ENCODE measurements at regions of chr7 and their contacts with region 1.

Region 1: GRCh38 chr7:28239823-28240204 is 59.2 kb upstream of the JAZF1 start:
- DNase-seq: peak; percentile 22
- ATAC-seq: peak; percentile 79
- H3K4me3 Mint-ChIP-seq: no peak overlapping the region
- H3K27ac Mint-ChIP-seq: no peak overlapping the region
- H3K4me1 Mint-ChIP-seq: peaks cover 13% of the 10 kb centered on the region
- H3K27me3 Mint-ChIP-seq: peaks cover 34% of the 10 kb centered on the region

Region 2: DNA sequence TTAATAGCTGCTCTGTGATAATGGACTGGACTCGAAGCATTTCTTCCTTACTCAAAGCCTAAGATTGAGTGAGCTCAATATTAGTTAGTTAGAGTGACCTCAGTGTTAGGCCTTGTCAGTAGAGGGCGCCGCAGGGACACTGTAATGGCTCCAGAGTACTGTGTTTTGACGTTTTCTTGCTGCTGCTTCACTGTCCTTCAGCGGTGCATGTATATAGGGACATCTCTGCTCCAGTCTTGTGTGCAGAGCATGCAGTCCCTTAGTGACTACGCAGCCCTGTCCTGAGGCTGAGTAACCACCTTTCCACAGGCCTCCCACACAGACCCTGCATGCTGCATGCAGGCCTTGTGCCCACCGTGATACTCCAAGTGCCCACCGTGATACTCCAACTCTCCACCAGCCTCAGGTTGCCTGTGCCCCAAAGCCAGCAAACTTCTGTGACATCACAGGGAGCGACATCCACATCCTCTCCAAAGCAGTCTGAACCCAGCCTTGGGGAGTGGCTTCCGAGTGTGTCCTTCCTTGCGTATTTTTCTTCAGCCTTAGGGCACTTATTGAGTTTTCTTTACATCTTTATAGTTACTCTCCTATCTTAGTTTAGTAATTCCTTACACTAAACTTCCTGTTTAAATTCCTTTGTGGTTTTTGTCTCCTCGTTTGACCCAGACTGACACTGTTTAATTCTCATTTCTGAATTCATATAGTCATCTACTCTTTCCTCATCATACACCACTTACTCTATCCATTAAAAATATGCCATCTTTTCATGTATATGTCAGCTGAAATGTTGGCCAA is 177.4 kb before region 1 on chr7:
- CTCF ChIA-PET with region 1: no interaction called
- POLR2A ChIA-PET with region 1: no interaction called
- intact Hi-C with region 1: no loop called
- DNase-seq: peak; percentile 79
- ATAC-seq: peak; percentile 79
- H3K4me3 Mint-ChIP-seq: no peak overlapping the region
- H3K27ac Mint-ChIP-seq: no peak overlapping the region
- H3K4me1 Mint-ChIP-seq: peaks cover 5% of the 10 kb centered on the region
- H3K27me3 Mint-ChIP-seq: no peaks in the 10 kb centered on the region

Region 3: DNA sequence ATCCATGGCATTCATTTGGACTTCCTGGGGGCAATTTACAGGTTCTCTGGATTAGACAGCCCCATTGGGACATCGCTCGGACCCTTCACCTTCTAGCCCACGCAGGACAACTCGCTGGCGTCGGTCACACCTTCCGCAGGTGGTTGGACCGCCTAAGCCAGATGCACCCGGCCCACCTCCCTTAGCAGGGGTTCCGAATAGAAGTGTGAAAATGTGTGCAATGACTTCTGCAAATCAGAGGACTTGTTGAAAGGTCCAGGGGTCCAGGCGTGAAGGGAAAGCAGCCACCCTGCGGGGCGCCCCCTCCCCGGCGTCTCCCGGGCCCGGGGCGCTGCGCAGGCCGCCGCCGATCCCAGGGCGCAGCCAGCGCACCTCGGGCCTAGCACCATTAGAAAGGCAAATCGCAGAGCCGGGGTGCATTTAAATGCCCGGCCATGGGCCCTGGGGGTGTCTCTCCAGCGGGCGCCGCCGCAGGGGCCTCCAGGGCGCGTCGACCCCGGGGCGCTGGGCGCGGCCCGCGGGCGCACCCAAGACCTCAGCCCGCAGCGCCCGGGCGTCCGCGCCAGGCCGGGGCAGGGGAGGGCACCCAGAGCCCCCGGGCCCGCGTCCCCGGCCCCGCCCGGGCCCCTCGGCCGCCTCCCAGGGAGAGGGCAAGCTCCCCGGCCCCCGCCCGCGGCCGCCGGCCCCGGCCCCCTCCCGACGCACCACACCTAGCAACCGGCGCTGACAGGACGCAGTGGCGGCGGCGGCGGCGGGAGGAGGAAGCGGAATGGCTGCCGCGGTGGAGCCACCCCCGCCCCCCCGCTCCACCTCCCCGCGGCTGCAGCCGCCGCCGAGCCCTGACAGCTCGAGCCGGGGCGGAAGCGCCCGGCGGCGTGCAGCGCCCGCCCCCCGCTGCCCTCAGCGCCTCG is 60.4 kb before region 1 on chr7:
- CTCF ChIA-PET with region 1: no interaction called
- POLR2A ChIA-PET with region 1: interaction called, 3 read pairs
- intact Hi-C with region 1: loop called in 1 of 2 experiments (anchors 1 kb)
- DNase-seq: peak; percentile 76
- ATAC-seq: peak; percentile 68
- H3K4me3 Mint-ChIP-seq: peak overlapping the region; percentile 63
- H3K27ac Mint-ChIP-seq: peak overlapping the region; percentile 55
- H3K4me1 Mint-ChIP-seq: peaks cover 40% of the 10 kb centered on the region
- H3K27me3 Mint-ChIP-seq: peaks cover 2% of the 10 kb centered on the region

Region 4: DNA sequence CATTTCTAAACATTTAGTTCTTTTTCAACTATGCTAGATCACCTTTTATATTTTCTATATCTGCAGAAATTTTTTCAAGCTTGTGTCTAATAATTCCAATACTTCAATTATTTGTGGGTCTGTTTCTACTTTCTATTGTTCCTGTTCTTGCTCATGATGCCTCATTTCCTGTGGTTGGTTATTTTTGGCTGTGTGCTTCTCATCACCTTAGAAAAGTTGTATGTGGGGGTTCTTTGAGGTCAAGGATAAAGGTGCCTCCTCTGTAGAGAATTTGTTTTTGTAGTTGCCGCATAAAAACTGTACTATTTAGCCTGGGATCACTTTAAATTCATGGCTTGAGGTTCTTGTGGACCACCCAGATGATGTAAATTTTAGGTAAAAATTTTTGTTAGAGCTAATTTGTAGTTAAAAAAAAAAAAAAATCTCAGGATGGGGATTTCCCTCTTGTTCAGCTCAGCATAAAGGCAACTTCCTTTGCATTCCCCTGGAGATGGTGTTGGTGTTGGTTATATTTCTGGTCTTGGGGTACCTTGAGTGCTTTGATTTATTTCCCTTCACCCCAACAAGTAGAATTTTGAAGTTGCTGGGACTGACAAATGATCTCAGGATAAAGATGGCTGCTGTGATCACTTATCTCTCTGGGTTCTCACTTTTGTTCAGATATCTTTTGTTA is 32.2 kb before region 1 on chr7:
- CTCF ChIA-PET with region 1: no interaction called
- POLR2A ChIA-PET with region 1: no interaction called
- intact Hi-C with region 1: loop called (anchors 1 kb)
- DNase-seq: no peak
- ATAC-seq: peak; percentile 81
- H3K4me3 Mint-ChIP-seq: peak overlapping the region; percentile 16
- H3K27ac Mint-ChIP-seq: peak overlapping the region; percentile 18
- H3K4me1 Mint-ChIP-seq: peaks cover 38% of the 10 kb centered on the region
- H3K27me3 Mint-ChIP-seq: peaks cover 12% of the 10 kb centered on the region

Region 5: GRCh38 chr7:28292834-28293526 is 53.2 kb after region 1 on chr7:
- CTCF ChIA-PET with region 1: no interaction called
- POLR2A ChIA-PET with region 1: no interaction called
- intact Hi-C with region 1: loop called (anchors 1 kb)
- DNase-seq: peak; percentile 22
- ATAC-seq: peak; percentile 92
- H3K4me3 Mint-ChIP-seq: no peak overlapping the region
- H3K27ac Mint-ChIP-seq: no peak overlapping the region
- H3K4me1 Mint-ChIP-seq: peaks cover 21% of the 10 kb centered on the region
- H3K27me3 Mint-ChIP-seq: peaks cover 19% of the 10 kb centered on the region

Region 6: DNA sequence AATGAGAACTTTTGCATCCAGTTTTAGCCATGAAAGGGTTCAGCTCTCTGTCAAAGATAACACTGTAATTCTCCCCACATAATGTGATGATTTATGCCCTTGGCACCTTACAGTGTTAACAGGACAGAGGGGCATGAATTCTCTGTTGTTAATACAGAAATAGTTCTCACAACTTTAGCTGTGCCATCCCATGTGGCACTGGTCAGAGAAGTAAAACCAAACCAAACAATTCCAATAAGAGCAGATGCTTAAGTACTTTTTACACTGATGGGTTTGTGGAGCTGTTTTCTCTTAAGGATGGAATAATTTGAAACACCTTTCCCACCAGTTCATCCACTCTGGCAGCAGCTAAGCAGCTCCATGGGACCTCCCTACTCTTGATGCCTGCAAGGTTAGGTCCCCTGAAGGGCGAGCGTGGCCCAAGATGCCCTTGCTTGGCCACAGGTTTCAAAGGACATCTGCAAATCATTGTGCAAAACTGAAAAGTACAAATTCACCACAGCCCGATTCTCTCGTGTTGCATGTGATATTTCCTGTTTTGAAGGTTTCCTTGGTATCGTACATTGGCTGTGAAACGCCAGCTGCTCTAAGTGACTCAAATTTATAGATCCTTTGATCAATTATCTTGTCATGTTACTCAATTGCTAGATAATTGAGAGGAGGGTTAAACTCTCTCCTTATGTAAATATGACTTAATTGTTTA is 90.0 kb after region 1 on chr7:
- CTCF ChIA-PET with region 1: no interaction called
- POLR2A ChIA-PET with region 1: no interaction called
- intact Hi-C with region 1: loop called in 1 of 2 experiments (anchors 1 kb)
- DNase-seq: peak; percentile 26
- ATAC-seq: peak; percentile 56
- H3K4me3 Mint-ChIP-seq: peak overlapping the region; percentile 4
- H3K27ac Mint-ChIP-seq: no peak overlapping the region
- H3K4me1 Mint-ChIP-seq: peaks cover 36% of the 10 kb centered on the region
- H3K27me3 Mint-ChIP-seq: peaks cover 6% of the 10 kb centered on the region

Region 7: DNA sequence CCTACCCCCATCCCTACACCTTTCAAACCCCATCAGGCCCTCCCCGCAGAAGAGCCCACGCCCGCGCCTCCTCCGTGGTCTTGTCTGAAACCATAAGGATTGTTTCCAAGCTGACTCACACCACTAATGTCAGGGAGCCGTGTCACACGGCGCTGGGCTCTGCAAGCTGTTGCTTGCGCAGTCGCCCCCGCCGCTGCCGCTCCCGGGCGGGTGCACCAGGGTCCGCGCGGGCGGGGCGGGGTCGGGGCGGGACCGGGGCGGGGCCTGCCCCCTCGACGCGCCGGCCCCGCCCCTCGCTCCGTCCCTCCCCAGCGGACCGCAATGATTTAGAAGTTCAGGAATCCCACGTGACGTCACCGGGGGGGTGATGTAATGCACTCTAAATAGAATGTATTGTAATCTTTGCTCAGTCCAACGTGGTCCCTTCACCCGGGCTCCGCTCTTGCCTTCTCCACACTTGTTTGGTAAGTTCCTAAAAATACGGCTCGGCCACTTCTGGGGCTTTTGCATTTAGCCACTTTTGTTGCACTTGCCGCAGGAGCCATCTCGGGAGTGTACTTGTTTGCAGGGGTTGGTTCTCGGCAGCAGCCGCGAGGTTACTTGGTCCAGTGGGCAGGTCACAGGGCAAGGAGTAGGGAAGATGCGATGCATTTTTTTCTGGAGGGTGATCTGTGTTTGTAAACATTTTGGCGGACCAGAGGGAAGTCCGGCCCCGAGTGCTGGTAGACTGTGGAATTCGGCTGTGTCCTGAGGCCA is 169.3 kb after region 1 on chr7:
- CTCF ChIA-PET with region 1: no interaction called
- POLR2A ChIA-PET with region 1: no interaction called
- intact Hi-C with region 1: loop called in 1 of 2 experiments (anchors 1 kb)
- DNase-seq: peak; percentile 91
- ATAC-seq: peak; percentile 86
- H3K4me3 Mint-ChIP-seq: peak overlapping the region; percentile 75
- H3K27ac Mint-ChIP-seq: peak overlapping the region; percentile 70
- H3K4me1 Mint-ChIP-seq: peaks cover 39% of the 10 kb centered on the region
- H3K27me3 Mint-ChIP-seq: peaks cover 62% of the 10 kb centered on the region

Region 8: GRCh38 chr7:28442540-28443420 is 203.0 kb after region 1 on chr7:
- CTCF ChIA-PET with region 1: no interaction called
- POLR2A ChIA-PET with region 1: no interaction called
- intact Hi-C with region 1: loop called in 1 of 2 experiments (anchors 1 kb)
- DNase-seq: peak; percentile 10
- ATAC-seq: peak; percentile 84
- H3K4me3 Mint-ChIP-seq: no peak overlapping the region
- H3K27ac Mint-ChIP-seq: no peak overlapping the region
- H3K4me1 Mint-ChIP-seq: peaks cover 16% of the 10 kb centered on the region
- H3K27me3 Mint-ChIP-seq: peaks cover 48% of the 10 kb centered on the region

Measured in activated CD4-positive, alpha-beta T cell treated with anti-CD3 and anti-CD28 coated beads for 36 hours (primary cell).